H1 (cell line): ENCODE measurements at regions of chr5 and their contacts with region 1.

Region 1: GRCh38 chr5:54905943-54906537 is 79.4 kb downstream of the ESM1 start:
- DNase-seq: peak in 1 of 2 experiments; percentile 79
- H3K4me3 ChIP-seq: no peak overlapping the region
- H3K27ac ChIP-seq: no peak overlapping the region
- H3K4me1 ChIP-seq: no peaks in the 10 kb centered on the region
- H3K27me3 ChIP-seq: no peaks in the 10 kb centered on the region
- CTCF ChIP-seq: peak in 2 of 3 experiments; percentile 61 to 85; a peak in 3 of 4 replicates
- EP300 ChIP-seq: no peak
- POLR2A ChIP-seq: no peak
- RAD21 ChIP-seq: peak; percentile 90 to 91

Region 2: GRCh38 chr5:54825005-54825404 is 81.0 kb before region 1 on chr5:
- CTCF ChIA-PET with region 1: no interaction called
- POLR2A ChIA-PET with region 1: no interaction called
- DNase-seq: no peak
- H3K4me3 ChIP-seq: no peak overlapping the region
- H3K27ac ChIP-seq: no peak overlapping the region
- H3K4me1 ChIP-seq: no peaks in the 10 kb centered on the region
- H3K27me3 ChIP-seq: no peaks in the 10 kb centered on the region
- CTCF ChIP-seq: no peak
- EP300 ChIP-seq: no peak
- POLR2A ChIP-seq: no peak
- RAD21 ChIP-seq: no peak

Region 3: DNA sequence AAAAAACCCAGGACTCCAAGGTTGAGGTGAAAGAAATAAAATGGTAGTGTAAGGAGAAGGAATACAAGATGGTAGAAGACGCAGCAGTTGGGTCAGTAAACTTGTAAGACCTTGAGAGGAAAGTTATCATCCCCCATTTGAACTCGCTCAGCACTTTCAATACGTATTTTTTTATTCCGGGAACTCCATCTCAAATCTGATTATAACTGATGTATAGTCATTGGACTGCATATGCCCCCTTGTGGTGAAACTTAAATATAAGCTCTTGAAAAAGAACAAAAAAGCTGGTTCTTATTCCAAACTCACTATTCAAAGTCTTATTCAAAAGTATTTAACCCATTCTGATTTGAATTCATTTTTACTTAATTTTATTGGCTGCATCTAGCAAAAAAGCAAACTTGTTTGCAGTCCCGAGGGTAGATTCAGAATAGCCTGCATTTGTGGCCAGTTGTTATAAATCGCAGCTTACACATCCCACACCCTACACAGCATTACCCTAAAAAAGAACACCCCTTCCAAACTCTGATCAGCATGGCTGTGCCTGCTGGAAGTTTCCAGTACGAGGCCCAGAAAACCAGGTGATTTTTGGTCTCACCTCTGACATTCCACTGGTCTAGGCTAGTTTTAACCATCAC is 38.6 kb before region 1 on chr5:
- CTCF ChIA-PET with region 1: interaction called, 10 read pairs
- POLR2A ChIA-PET with region 1: no interaction called
- DNase-seq: no peak
- H3K4me3 ChIP-seq: no peak overlapping the region
- H3K27ac ChIP-seq: no peak overlapping the region
- H3K4me1 ChIP-seq: no peaks in the 10 kb centered on the region
- H3K27me3 ChIP-seq: peaks cover 0 to 1% (median 0%) of the 10 kb centered on the region in 4 experiments; a peak in 1 of 7 replicates
- CTCF ChIP-seq: peak in 1 of 3 experiments; percentile 11; a peak in 1 of 4 replicates
- EP300 ChIP-seq: no peak
- POLR2A ChIP-seq: no peak
- RAD21 ChIP-seq: peak; percentile 47 to 51

Region 4: GRCh38 chr5:54895816-54896341 is 10.2 kb before region 1 on chr5:
- CTCF ChIA-PET with region 1: interaction called, 29 read pairs
- POLR2A ChIA-PET with region 1: no interaction called
- DNase-seq: no peak
- H3K4me3 ChIP-seq: no peak overlapping the region
- H3K27ac ChIP-seq: no peak overlapping the region
- H3K4me1 ChIP-seq: no peaks in the 10 kb centered on the region
- H3K27me3 ChIP-seq: no peaks in the 10 kb centered on the region
- CTCF ChIP-seq: peak in 2 of 3 experiments; percentile 33 to 50; a peak in 3 of 4 replicates
- EP300 ChIP-seq: no peak
- POLR2A ChIP-seq: no peak
- RAD21 ChIP-seq: peak; percentile 61 to 70

Region 5: GRCh38 chr5:54959673-54960418 is 53.8 kb after region 1 on chr5:
- CTCF ChIA-PET with region 1: interaction called, 106 read pairs
- POLR2A ChIA-PET with region 1: no interaction called
- DNase-seq: peak; percentile 7 to 76
- H3K4me3 ChIP-seq: no peak overlapping the region
- H3K27ac ChIP-seq: no peak overlapping the region
- H3K4me1 ChIP-seq: no peaks in the 10 kb centered on the region
- H3K27me3 ChIP-seq: no peaks in the 10 kb centered on the region
- CTCF ChIP-seq: peak; percentile 10 to 63 (median 57)
- EP300 ChIP-seq: no peak
- POLR2A ChIP-seq: no peak
- RAD21 ChIP-seq: peak; percentile 54 to 69

Region 6: GRCh38 chr5:55134053-55134722 is 228.1 kb after region 1 on chr5:
- CTCF ChIA-PET with region 1: interaction called, 13 read pairs
- POLR2A ChIA-PET with region 1: no interaction called
- DNase-seq: no peak
- H3K4me3 ChIP-seq: no peak overlapping the region
- H3K27ac ChIP-seq: no peak overlapping the region
- H3K4me1 ChIP-seq: no peaks in the 10 kb centered on the region
- H3K27me3 ChIP-seq: no peaks in the 10 kb centered on the region
- CTCF ChIP-seq: no peak
- EP300 ChIP-seq: no peak
- POLR2A ChIP-seq: no peak
- RAD21 ChIP-seq: no peak

Region 7: GRCh38 chr5:55151923-55152842 is 246.1 kb after region 1 on chr5:
- CTCF ChIA-PET with region 1: interaction called, 93 read pairs
- POLR2A ChIA-PET with region 1: no interaction called
- DNase-seq: no peak
- H3K4me3 ChIP-seq: no peak overlapping the region
- H3K27ac ChIP-seq: no peak overlapping the region
- H3K4me1 ChIP-seq: no peaks in the 10 kb centered on the region
- H3K27me3 ChIP-seq: no peaks in the 10 kb centered on the region
- CTCF ChIP-seq: no peak
- EP300 ChIP-seq: no peak
- POLR2A ChIP-seq: no peak
- RAD21 ChIP-seq: no peak